Left ventricle myocardium superior (tissue), 1 donor: ENCODE measurements at regions of chr1 and their contacts with region 1.

Region 1: GRCh38 chr1:182877842-182878241 is 38.7 kb downstream of the DHX9 start:
- DNase-seq: no peak
- ATAC-seq: no peak

Region 2: DNA sequence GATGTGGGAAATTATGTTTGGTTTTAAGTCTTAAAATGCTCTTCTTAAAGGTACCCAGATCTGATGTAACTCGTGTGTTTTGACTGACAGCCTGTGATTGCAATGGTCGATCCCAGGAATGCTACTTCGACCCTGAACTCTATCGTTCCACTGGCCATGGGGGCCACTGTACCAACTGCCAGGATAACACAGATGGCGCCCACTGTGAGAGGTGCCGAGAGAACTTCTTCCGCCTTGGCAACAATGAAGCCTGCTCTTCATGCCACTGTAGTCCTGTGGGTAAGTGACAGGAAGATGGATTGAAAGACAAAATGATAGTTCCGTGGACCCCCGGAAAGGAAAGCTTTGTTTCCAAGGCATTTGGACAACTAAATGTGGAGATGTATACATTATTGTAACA is 236.6 kb after region 1 on chr1:
- intact Hi-C with region 1: no loop called
- DNase-seq: no peak
- ATAC-seq: no peak

Region 3: GRCh38 chr1:183537405-183537804 is 659.6 kb after region 1 on chr1:
- intact Hi-C with region 1: loop called (anchors 10 kb)
- DNase-seq: no peak
- ATAC-seq: no peak